B cell (primary cell): ENCODE measurements at regions of chr11 and their contacts with region 1.

Region 1: GRCh38 chr11:63738720-63739360 is 29.7 kb downstream of the ZFTA start:
- DNase-seq: peak; percentile 75
- ATAC-seq: peak; percentile 47
- H3K4me3 ChIP-seq: no peak overlapping the region
- H3K4me3 Mint-ChIP-seq: no peak overlapping the region
- H3K27ac ChIP-seq: no peak overlapping the region
- H3K27ac Mint-ChIP-seq: no peak overlapping the region
- H3K4me1 ChIP-seq: no peaks in the 10 kb centered on the region
- H3K4me1 Mint-ChIP-seq: peaks cover 2% of the 10 kb centered on the region
- H3K27me3 ChIP-seq: no peaks in the 10 kb centered on the region
- H3K27me3 Mint-ChIP-seq: no peaks in the 10 kb centered on the region
- CTCF ChIP-seq: peak; percentile 97

Region 2: DNA sequence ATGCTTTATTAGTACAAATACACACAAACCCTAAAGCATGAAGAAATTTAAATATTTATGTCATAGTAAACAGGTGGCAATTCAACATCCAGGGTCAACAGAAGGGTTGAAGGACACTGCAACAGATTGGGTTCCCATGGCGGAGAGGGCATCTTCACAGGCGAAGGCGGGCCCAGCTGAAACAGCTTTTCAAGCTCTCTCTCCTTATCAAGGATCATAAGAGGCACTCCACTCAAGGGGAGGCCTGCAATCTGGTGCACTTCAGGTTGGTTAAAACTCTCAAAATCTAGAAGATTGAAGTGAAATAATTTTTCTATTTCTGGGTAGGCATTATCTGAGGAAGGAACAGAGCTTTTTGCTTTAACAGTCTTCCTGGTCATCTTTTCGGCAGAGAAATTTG is 706.4 kb before region 1 on chr11:
- CTCF ChIA-PET with region 1: interaction called, 3 read pairs
- POLR2A ChIA-PET with region 1: no interaction called
- intact Hi-C with region 1: loop called (anchors 10 kb)
- DNase-seq: no peak
- ATAC-seq: no peak
- H3K4me3 ChIP-seq: no peak overlapping the region
- H3K4me3 Mint-ChIP-seq: no peak overlapping the region
- H3K27ac ChIP-seq: no peak overlapping the region
- H3K27ac Mint-ChIP-seq: no peak overlapping the region
- H3K4me1 ChIP-seq: peaks cover 0 to 2% of the 10 kb centered on the region in 2 donors
- H3K4me1 Mint-ChIP-seq: peaks cover 1% of the 10 kb centered on the region
- H3K27me3 ChIP-seq: peaks cover 0 to 4% (median 0%) of the 10 kb centered on the region in 4 experiments
- H3K27me3 Mint-ChIP-seq: peaks cover 42% of the 10 kb centered on the region
- CTCF ChIP-seq: no peak

Region 3: GRCh38 chr11:63635762-63636465 is 102.9 kb before region 1 on chr11:
- CTCF ChIA-PET with region 1: interaction called, 22 read pairs
- POLR2A ChIA-PET with region 1: no interaction called
- intact Hi-C with region 1: loop called (anchors 1 kb)
- DNase-seq: peak; percentile 75
- ATAC-seq: peak; percentile 72
- H3K4me3 ChIP-seq: no peak overlapping the region
- H3K4me3 Mint-ChIP-seq: no peak overlapping the region
- H3K27ac ChIP-seq: no peak overlapping the region
- H3K27ac Mint-ChIP-seq: no peak overlapping the region
- H3K4me1 ChIP-seq: peaks cover 0 to 7% of the 10 kb centered on the region in 2 donors
- H3K4me1 Mint-ChIP-seq: peaks cover 7% of the 10 kb centered on the region
- H3K27me3 ChIP-seq: no peaks in the 10 kb centered on the region
- H3K27me3 Mint-ChIP-seq: no peaks in the 10 kb centered on the region
- CTCF ChIP-seq: peak; percentile 87

Region 4: DNA sequence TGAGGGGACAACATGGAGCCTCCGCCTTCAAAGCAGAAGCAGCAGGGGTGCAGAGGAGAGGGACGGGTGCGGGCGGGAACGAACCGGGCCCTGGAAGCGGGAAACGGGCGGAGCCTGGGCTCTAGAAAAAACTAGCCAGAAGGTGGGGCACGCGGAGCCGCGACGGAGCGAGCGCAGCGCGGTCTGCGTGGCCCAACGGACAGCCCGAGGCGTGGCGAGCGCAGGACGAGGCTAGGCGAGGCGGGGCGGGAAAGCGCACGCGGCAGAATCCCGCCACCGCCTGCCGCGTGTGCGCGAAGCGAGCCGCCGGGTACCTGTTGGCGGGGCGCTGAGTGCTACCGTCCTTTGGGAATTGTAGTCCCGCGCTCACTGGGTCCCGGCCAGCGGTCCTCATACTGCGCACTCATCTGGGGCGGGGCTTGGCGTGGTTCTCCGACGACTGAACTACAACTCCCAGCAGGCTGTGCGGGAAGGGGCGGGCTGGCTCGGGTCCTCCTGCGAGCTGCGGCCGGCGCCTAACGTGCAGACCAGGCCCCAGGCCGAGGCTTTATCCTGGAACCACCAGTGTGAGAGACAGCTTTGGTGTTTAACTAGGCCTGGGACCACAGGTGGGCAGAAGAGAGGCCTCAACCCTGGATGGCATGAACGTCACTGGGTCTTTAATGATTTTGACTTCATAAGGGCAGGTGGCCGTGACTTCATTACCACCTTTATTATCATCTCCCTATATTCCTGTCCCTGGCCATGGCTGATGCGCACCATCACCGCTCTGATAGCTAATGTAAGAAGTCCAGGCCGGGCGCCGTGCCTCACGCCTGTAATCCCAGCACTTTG is 67.3 kb before region 1 on chr11 and contains the start of gene ATL3:
- CTCF ChIA-PET with region 1: interaction called, 39 read pairs
- POLR2A ChIA-PET with region 1: interaction called, 5 read pairs
- intact Hi-C with region 1: loop called (anchors 1 kb)
- DNase-seq: peak; percentile 97
- ATAC-seq: peak; percentile 92
- H3K4me3 ChIP-seq: peak within 1 kb of the TSS; percentile 22 to 81 (median 78)
- H3K4me3 Mint-ChIP-seq: peak within 1 kb of the TSS; percentile 88
- H3K27ac ChIP-seq: peak within 1 kb of the TSS; percentile 62 to 73
- H3K27ac Mint-ChIP-seq: peak within 1 kb of the TSS; percentile 92
- H3K4me1 ChIP-seq: peaks cover 9 to 13% of the 10 kb centered on the region in 2 donors
- H3K4me1 Mint-ChIP-seq: peaks cover 22% of the 10 kb centered on the region
- H3K27me3 ChIP-seq: no peaks in the 10 kb centered on the region
- H3K27me3 Mint-ChIP-seq: no peaks in the 10 kb centered on the region
- CTCF ChIP-seq: no peak
- total RNA-seq, gene ATL3: 33.8 and 36.5 TPM in 2 replicates

Region 5: DNA sequence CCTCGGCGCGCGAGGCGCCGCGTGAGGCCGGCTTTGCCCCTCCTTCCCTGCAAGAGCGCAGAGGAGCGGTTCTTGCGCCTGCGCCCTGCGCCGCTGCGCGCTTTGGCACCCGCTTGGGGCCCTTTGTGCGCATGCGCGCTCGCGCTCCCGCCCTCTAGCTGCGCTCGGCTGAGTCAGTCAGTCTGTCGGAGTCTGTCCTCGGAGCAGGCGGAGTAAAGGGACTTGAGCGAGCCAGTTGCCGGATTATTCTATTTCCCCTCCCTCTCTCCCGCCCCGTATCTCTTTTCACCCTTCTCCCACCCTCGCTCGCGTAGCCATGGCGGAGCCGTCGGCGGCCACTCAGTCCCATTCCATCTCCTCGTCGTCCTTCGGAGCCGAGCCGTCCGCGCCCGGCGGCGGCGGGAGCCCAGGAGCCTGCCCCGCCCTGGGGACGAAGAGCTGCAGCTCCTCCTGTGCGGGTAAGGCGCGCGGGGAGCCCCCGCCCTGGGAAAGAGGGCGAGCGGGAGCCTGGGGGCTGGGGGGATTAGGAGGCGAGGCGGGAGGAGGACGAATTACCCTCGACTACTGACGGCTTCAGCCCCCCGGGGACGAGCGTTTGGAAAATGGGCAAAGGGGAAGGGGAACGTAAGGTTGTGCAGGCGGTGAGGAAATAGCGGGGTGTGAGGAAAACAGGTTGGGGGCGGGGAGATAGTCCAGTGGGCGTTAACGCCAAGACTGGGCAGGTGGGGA is 57.4 kb before region 1 on chr11 and contains the start of gene RTN3:
- CTCF ChIA-PET with region 1: interaction called, 11 read pairs
- POLR2A ChIA-PET with region 1: no interaction called
- intact Hi-C with region 1: no loop called
- DNase-seq: peak; percentile 99
- ATAC-seq: peak; percentile 92
- H3K4me3 ChIP-seq: peak within 1 kb of the TSS; percentile 75 to 98 (median 90)
- H3K4me3 Mint-ChIP-seq: peak within 1 kb of the TSS; percentile 95
- H3K27ac ChIP-seq: peak within 1 kb of the TSS; percentile 83 to 84
- H3K27ac Mint-ChIP-seq: peak within 1 kb of the TSS; percentile 97
- H3K4me1 ChIP-seq: peaks cover 15 to 16% of the 10 kb centered on the region in 2 donors
- H3K4me1 Mint-ChIP-seq: peaks cover 27% of the 10 kb centered on the region
- H3K27me3 ChIP-seq: no peaks in the 10 kb centered on the region
- H3K27me3 Mint-ChIP-seq: peaks cover 6% of the 10 kb centered on the region
- CTCF ChIP-seq: no peak
- total RNA-seq, gene RTN3: 20.1 and 24.9 TPM in 2 replicates

Region 6: GRCh38 chr11:63749624-63750023 is 10.8 kb after region 1 on chr11:
- CTCF ChIA-PET with region 1: interaction called, 11 read pairs
- POLR2A ChIA-PET with region 1: no interaction called
- intact Hi-C with region 1: no loop called
- DNase-seq: no peak
- ATAC-seq: no peak
- H3K4me3 ChIP-seq: no peak overlapping the region
- H3K4me3 Mint-ChIP-seq: no peak overlapping the region
- H3K27ac ChIP-seq: no peak overlapping the region
- H3K27ac Mint-ChIP-seq: no peak overlapping the region
- H3K4me1 ChIP-seq: no peaks in the 10 kb centered on the region
- H3K4me1 Mint-ChIP-seq: no peaks in the 10 kb centered on the region
- H3K27me3 ChIP-seq: no peaks in the 10 kb centered on the region
- H3K27me3 Mint-ChIP-seq: no peaks in the 10 kb centered on the region
- CTCF ChIP-seq: no peak

Region 7: GRCh38 chr11:63813035-63813562 is 74.3 kb after region 1 on chr11 and contains the start of gene SPINDOC:
- CTCF ChIA-PET with region 1: no interaction called
- POLR2A ChIA-PET with region 1: no interaction called
- intact Hi-C with region 1: no loop called
- DNase-seq: peak; percentile 76
- ATAC-seq: peak; percentile 95
- H3K4me3 ChIP-seq: peak within 1 kb of the TSS; percentile 34 to 91 (median 83)
- H3K4me3 Mint-ChIP-seq: peak within 1 kb of the TSS; percentile 86
- H3K27ac ChIP-seq: peak within 1 kb of the TSS in 1 of 2 donors; percentile 59
- H3K27ac Mint-ChIP-seq: peak within 1 kb of the TSS; percentile 41
- H3K4me1 ChIP-seq: peaks cover 13 to 18% of the 10 kb centered on the region in 2 donors
- H3K4me1 Mint-ChIP-seq: peaks cover 22% of the 10 kb centered on the region
- H3K27me3 ChIP-seq: no peaks in the 10 kb centered on the region
- H3K27me3 Mint-ChIP-seq: no peaks in the 10 kb centered on the region
- CTCF ChIP-seq: no peak
- total RNA-seq, gene SPINDOC: 23.9 and 27.5 TPM in 2 replicates